ENCODE measurements at regions of chr7 and their contacts with region 1.

Region 1: DNA sequence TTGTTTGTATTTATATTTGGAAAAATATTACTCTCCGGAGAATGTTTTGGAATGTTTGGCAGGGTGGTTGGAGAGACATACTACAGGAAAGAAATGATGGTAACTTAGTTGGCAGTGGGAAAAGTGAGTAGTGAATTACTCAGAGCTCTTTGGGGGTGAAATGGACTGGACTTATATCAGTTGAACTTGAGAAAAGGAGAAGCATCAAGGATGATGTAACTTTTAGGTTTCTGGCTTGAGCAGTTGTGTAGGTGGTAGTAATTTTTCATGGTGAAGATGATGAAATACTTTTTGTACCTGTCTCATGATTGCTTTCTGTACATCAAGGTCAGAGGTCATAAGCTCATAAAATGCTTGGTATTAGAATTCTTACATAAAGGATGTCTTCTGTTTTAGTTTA is 617.2 kb downstream of the AUTS2 start:
- DNase-seq: peak; percentile 15
- H3K4me3 ChIP-seq: no peak overlapping the region
- H3K27ac ChIP-seq: no peak overlapping the region
- H3K4me1 ChIP-seq: no peaks in the 10 kb centered on the region
- CTCF ChIP-seq: no peak

Region 2: DNA sequence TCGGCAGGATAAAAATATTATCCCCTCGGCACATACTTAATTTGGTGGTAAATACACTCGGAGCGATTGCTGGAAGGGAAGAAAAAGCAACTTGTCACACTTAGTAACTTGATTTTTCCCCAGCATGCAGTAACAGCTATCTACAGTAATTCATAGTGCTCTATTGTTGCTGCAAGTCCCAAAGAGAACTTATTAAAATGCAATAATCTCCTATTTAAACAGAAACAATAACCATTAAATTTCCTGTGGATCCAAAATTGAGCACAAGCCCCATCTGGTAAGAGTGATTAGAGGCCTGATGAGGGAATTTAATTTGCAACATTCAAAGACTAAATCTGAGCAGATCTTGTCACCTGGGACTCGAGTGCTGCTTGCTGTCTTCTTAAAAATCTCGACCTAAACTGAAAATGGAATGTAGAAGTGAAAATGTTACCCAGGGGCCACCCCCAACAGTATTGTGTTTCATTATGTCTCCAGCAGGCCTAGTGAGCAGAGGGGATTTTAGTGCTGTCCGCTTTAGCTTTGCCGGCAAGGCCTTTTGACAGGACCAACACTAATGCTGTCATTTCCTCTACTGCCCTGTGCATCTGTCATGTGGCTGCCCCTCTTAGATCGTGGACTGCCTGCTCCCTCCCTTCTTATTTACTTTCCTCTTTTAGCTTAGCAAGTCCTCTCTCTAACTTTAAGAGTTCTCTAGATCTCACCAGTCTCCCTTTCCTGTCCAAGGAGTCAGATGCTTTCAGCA is 22.5 kb after region 1 on chr7:
- CTCF ChIA-PET with region 1: no interaction called
- POLR2A ChIA-PET with region 1: interaction called, 14 read pairs
- intact Hi-C with region 1: no loop called
- DNase-seq: peak; percentile 79
- H3K4me3 ChIP-seq: peak overlapping the region; percentile 1
- H3K27ac ChIP-seq: peak overlapping the region; percentile 72
- H3K4me1 ChIP-seq: peaks cover 22% of the 10 kb centered on the region
- CTCF ChIP-seq: no peak

Region 3: DNA sequence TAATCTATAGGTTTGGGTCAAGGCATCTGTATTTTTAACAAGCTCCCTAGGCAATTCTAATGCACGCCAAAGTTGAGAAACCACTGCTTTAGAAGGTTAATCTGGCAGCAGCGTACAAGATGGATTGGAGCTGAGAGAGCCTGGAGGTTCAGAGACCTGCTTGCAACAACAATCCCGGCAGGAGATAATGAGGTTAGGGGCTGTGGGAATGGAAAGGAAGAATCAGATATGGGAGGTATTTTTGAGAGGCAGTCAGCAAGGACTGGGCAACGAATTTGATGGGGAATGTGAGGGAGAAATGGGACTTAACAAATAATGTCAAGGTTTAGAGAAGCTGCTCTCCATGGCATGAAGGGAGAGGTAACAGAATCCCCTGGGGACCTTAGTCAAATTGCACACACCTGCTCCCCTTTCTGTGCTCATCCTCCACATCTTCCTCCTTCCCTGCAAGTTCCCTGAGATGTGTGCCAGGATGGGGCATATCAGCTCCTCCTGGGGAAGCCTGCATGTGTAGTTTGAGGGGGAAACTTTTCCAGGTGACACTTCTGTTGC is 185.4 kb after region 1 on chr7:
- CTCF ChIA-PET with region 1: no interaction called
- POLR2A ChIA-PET with region 1: no interaction called
- intact Hi-C with region 1: no loop called
- DNase-seq: peak; percentile 72
- H3K4me3 ChIP-seq: peak overlapping the region; percentile 18
- H3K27ac ChIP-seq: no peak overlapping the region
- H3K4me1 ChIP-seq: peaks cover 53% of the 10 kb centered on the region
- CTCF ChIP-seq: no peak